OCI-LY7 (cell line): ENCODE measurements at regions of chr17 and their contacts with region 1.

Region 1: GRCh38 chr17:67452681-67453554 is 75.8 kb downstream of the PITPNC1 start:
- DNase-seq: peak; percentile 66
- H3K4me3 ChIP-seq: peak overlapping the region; percentile 42
- H3K27ac ChIP-seq: peak overlapping the region; percentile 74
- H3K4me1 ChIP-seq: peaks cover 90% of the 10 kb centered on the region
- CTCF ChIP-seq: no peak

Region 2: DNA sequence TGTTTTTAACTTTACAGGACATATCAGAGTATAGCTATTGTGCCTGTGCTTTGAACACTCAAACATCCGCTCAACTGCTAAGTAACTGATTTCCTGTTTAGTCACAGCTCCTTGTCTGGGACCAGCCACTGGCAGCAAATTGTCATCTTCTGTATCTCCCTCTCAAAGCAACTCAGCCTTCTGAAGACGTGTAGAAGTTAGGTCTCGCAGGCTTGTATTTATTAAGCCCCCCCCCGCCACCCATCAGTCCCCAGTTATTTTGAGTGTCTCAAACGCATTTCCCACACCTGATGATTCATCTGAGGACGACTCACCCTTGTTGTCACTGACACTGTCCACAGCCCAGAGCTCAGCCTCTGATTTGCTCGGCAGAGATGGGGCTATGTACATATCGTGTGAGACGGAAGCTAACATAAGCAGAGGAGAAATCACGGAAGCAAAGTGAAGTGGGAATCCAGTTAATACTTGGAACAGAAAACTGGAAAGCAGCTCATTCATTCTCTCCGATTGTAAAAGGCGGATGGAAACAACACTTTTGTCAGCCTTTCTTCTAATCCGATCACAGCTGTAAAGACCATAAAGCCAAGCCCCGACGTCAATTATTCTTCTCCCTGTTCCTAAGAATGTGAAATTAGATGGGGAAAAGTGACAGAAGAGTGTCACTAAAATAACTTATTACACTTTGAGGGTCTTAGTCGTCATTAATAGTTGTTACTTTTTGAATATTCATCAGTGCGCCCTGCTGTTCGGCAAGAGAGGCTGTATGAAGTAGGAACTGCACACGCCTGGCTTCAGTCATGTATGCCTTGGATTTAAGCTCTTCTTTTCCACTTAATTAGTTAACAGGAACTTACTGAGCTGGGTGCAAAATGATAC is 11.6 kb before region 1 on chr17:
- CTCF ChIA-PET with region 1: no interaction called
- POLR2A ChIA-PET with region 1: interaction called, 23 read pairs
- intact Hi-C with region 1: no loop called
- DNase-seq: peak; percentile 85
- H3K4me3 ChIP-seq: peak overlapping the region; percentile 51
- H3K27ac ChIP-seq: peak overlapping the region; percentile 85
- H3K4me1 ChIP-seq: peaks cover 28% of the 10 kb centered on the region
- CTCF ChIP-seq: no peak

Region 3: DNA sequence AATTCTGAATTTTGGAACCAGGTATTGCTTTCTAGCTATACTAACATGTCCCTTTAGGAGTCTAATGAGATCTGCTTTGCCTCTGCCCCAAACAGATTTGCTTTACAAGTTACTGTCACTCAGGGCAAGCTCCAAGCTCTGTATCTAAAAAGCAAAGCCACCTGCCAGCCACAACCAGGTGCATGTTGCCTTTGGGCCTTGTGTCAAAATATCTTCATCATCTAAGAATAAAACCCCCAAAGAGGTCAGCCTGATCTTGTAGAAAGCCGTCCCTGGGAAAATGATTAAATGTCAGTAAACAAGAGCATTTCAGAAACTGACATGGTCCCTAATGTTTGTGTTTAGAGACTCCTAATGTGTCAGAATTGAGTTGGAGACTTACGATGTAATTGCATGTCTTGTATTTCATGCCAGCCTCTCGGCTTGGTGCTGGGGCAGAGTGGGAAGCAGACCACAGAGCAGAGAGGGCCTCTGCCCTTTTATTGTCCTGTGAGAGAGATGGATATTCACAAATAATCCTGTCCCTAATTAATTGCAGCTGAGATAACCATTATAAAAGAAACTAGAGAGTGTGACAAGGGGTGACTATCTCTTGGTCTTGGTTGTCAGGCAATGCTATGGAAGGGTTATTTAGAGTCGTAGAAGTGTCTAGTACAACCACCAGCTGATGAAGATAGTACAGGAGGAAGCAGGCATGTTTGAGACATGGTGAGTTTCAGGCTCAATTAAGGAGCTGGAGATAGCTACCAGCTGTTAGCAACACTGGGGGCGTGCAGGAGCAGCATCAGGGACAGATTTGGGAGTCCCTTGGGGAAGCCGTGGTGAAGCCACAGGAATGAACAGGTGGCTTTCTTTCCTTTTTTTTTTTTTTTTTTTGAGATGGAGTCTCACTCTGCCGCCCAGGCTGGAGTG is 14.9 kb after region 1 on chr17:
- CTCF ChIA-PET with region 1: no interaction called
- POLR2A ChIA-PET with region 1: interaction called, 33 read pairs
- intact Hi-C with region 1: loop called (anchors 2 kb)
- DNase-seq: peak; percentile 83
- H3K4me3 ChIP-seq: peak overlapping the region; percentile 48
- H3K27ac ChIP-seq: peak overlapping the region; percentile 89
- H3K4me1 ChIP-seq: peaks cover 46% of the 10 kb centered on the region
- CTCF ChIP-seq: no peak

Region 4: DNA sequence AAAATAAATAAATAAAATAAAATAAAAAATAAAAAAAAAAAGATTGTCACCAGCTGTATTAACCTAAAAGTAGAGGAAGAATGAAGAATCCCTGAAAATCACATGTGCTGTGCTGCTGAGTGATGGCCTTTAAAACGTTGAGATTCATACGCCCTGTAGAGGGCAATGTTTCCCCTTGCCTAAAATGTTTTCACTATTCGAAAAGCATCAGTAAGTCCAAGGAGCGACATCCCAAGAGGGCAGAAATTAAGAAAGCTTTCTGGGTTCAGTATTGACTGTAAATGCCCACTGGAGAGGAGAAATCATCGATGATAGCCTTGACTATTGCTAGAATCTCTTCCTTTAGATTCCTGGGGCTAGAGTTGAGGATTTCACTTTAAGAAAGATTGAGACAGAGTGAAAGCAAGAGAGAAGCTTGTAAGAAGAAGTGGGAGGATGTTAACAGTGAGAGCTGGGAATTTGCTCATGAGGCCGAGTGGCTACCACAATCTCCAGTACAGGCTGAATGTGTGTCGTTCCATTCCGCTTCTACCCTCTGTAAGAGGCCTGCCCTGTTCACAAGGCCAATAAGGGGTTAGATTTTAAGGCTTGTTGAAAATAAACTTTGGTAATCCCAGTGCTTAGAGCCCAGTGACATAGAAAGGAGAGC is 1319.1 kb after region 1 on chr17:
- CTCF ChIA-PET with region 1: no interaction called
- POLR2A ChIA-PET with region 1: no interaction called
- intact Hi-C with region 1: no loop called
- DNase-seq: peak; percentile 80
- H3K4me3 ChIP-seq: peak overlapping the region; percentile 21
- H3K27ac ChIP-seq: no peak overlapping the region
- H3K4me1 ChIP-seq: peaks cover 22% of the 10 kb centered on the region
- CTCF ChIP-seq: peak; percentile 90